OCI-LY7 (cell line): ENCODE measurements at regions of chr16 and their contacts with region 1.

Region 1: GRCh38 chr16:85610508-85611332 is 2.4 kb upstream of the GSE1 start:
- DNase-seq: peak; percentile 91
- H3K4me3 ChIP-seq: peak overlapping the region; percentile 76
- H3K27ac ChIP-seq: peak overlapping the region; percentile 86
- H3K4me1 ChIP-seq: peaks cover 75% of the 10 kb centered on the region
- CTCF ChIP-seq: peak; percentile 94

Region 2: DNA sequence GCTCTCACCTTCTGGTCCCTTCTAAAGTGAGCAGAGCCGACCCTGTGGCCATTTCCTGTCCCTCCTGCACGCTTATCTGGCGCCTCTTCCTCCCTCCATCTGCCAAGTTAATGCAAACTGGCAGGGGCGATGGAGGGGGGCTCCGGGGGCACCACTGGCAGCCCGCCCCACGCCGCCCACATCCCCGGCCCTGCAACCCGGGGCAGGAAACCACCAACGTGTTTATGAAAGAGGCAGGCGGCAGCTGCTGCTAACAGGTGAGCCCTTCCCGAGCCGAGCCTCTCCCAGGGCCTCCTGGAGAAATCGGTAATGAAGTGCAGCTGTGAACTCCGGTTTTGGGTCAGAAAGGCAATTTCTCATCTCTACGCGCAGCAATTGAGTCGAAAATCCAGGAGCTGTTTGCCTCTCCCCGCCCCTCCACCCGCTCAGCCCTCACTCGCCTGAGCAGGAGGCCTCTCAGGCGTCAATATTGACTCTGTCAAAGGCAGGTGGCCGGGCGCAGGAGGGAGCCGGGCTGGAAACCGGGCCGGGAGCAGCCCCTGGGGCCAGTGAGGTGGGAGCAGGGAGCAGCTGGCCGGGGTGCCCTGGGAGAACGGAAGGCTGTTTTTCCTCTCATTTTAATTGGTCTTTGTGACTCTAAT is 162.0 kb before region 1 on chr16:
- CTCF ChIA-PET with region 1: interaction called, 16 read pairs
- POLR2A ChIA-PET with region 1: interaction called, 5 read pairs
- intact Hi-C with region 1: loop called (anchors 1 kb)
- DNase-seq: peak; percentile 87
- H3K4me3 ChIP-seq: peak overlapping the region; percentile 18
- H3K27ac ChIP-seq: peak overlapping the region; percentile 86
- H3K4me1 ChIP-seq: peaks cover 61% of the 10 kb centered on the region
- CTCF ChIP-seq: no peak

Region 3: DNA sequence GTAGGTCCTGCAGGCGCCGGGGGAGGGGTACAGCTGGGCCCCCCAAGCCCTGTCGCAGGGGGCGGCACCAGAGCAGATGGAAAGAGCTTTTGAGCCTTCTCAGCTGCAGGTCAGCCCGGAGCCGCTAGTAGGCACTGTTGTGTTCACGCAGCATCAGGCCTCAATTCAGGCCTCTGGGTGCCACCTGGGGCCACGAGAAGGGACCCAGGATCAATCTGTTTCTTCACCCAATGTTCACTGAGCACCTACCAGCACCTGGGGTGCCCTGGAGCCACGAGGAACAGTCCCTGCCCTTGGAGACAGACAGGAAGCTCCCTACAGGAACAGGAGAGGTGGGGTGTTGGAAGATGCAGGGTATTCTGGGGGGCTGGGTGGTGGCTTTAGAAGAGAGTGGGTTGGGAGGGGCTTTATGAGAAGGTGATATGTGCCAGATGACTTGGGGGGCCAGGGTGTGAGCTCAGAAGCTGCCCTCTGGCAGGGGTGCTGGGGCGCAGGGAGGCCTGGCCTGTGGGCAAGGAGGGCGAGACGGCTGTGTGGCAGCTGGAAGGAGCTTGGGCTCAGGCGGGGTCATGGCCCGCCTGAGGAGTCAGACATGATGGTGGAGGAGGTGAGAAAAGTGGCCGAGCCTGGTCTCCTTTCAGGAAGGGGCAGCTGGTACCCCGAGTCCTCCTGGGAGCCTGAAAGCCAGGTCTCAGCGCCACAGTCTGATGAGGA is 119.5 kb before region 1 on chr16:
- CTCF ChIA-PET with region 1: interaction called, 6 read pairs
- POLR2A ChIA-PET with region 1: no interaction called
- intact Hi-C with region 1: loop called (anchors 2 kb)
- DNase-seq: peak; percentile 70
- H3K4me3 ChIP-seq: no peak overlapping the region
- H3K27ac ChIP-seq: no peak overlapping the region
- H3K4me1 ChIP-seq: peaks cover 4% of the 10 kb centered on the region
- CTCF ChIP-seq: peak; percentile 94

Region 4: GRCh38 chr16:85554112-85554813 is 56.5 kb before region 1 on chr16:
- CTCF ChIA-PET with region 1: interaction called, 4 read pairs
- POLR2A ChIA-PET with region 1: no interaction called
- intact Hi-C with region 1: loop called (anchors 1 kb)
- DNase-seq: peak; percentile 88
- H3K4me3 ChIP-seq: peak overlapping the region; percentile 74
- H3K27ac ChIP-seq: peak overlapping the region; percentile 84
- H3K4me1 ChIP-seq: peaks cover 37% of the 10 kb centered on the region
- CTCF ChIP-seq: no peak

Region 5: GRCh38 chr16:85688586-85689284 is 78.0 kb after region 1 on chr16 and contains the start of gene GINS2:
- CTCF ChIA-PET with region 1: no interaction called
- POLR2A ChIA-PET with region 1: no interaction called
- intact Hi-C with region 1: loop called (anchors 2 kb)
- DNase-seq: peak; percentile 97
- H3K4me3 ChIP-seq: peak within 1 kb of the TSS; percentile 87
- H3K27ac ChIP-seq: peak within 1 kb of the TSS; percentile 90
- H3K4me1 ChIP-seq: peaks cover 50% of the 10 kb centered on the region
- CTCF ChIP-seq: no peak
- total RNA-seq, gene GINS2: 74.3 and 80.9 TPM in 2 replicates

Region 6: DNA sequence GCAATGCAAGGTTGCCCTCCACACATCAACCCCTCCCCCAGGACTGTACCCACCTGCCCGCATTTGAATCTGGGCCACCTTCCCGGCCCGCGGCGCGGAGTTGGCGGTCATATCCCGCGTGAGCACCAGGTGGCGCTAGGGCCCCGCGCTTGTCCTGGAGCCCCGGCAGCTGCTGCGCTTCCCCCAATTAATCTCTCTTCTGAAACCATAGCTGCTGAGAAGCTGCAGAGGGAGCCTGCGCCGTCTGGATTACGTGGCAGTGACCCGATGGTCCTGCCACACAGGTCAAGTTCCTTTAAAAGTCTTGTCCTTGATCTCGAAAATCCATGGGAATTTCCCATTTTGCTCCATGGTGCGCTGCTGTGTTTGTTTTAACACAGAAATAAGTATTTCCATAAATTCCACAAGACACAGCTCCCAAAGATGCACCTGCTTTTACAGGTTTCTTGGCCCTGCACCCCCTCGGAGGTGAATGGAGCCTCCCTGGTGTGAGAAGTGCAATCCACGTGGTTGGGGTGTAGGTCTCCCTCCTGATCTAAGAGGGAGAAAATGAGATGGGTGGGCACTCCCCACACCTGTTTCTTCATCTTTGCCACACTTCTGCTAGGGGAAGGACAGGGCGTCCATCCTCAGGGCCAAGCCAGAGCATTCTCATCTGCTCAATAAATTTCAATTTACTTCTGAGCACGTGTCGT is 210.9 kb after region 1 on chr16:
- CTCF ChIA-PET with region 1: no interaction called
- POLR2A ChIA-PET with region 1: no interaction called
- intact Hi-C with region 1: no loop called
- DNase-seq: peak; percentile 90
- H3K4me3 ChIP-seq: no peak overlapping the region
- H3K27ac ChIP-seq: no peak overlapping the region
- H3K4me1 ChIP-seq: peaks cover 12% of the 10 kb centered on the region
- CTCF ChIP-seq: peak; percentile 99